ENCODE measurements at regions of chr19 and their contacts with region 1.

Region 1: DNA sequence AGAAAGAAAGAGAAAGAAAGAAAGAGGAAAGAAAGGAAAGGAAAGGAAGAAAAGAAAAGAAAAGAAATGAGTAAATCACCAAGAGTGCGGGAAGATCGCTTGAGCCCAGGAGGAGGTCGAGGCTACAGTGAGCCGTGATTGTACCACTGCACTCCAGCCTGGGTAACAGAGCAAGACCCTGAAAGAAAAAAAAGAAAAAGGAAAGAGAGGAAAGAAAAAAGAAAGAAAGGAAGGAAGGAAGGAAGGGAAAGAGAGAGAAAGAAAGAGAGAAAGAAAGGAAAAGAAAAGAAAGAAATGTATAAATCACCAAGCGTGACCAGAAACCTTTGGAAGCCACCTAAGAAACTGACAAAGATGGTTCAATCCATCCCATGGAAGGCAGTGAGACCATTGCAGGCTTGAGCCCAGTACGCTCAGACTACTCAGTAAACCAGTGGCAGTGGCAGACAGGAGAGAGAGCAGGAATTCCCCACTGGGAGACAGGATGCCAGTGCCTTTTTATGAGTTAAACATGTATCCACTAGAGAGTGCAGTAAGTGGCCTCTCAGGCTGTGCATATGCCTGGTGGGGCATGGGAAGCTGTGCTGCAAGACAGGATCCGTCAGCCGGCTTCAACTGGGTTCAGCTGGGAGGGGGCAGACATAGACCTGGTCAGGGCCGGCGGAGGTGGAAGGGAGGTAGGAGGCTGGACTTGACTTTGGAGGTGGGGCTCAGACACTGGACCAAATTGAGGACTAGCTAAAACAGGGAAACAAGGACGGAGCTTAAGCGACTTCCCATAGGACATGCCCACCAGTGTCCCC is 4.8 kb downstream of the GPR42 start:
- DNase-seq: no peak
- H3K4me3 ChIP-seq: no peak overlapping the region
- H3K27ac ChIP-seq: no peak overlapping the region
- H3K4me1 ChIP-seq: no peaks in the 10 kb centered on the region
- H3K27me3 ChIP-seq: peaks cover 0 to 2% (median 0%) of the 10 kb centered on the region in 4 experiments; a peak in 1 of 7 replicates
- CTCF ChIP-seq: no peak
- EP300 ChIP-seq: no peak
- POLR2A ChIP-seq: no peak
- RAD21 ChIP-seq: no peak

Region 2: GRCh38 chr19:35357867-35358573 is 17.7 kb before region 1 on chr19 and contains the start of gene FFAR3:
- CTCF ChIA-PET with region 1: interaction called, 16 read pairs
- POLR2A ChIA-PET with region 1: no interaction called
- DNase-seq: peak in 1 of 2 experiments; percentile 35
- H3K4me3 ChIP-seq: no peak within 1 kb of the TSS
- H3K27ac ChIP-seq: no peak within 1 kb of the TSS
- H3K4me1 ChIP-seq: no peaks in the 10 kb centered on the region
- H3K27me3 ChIP-seq: no peaks in the 10 kb centered on the region
- CTCF ChIP-seq: no peak
- EP300 ChIP-seq: no peak
- POLR2A ChIP-seq: no peak
- RAD21 ChIP-seq: no peak
- total RNA-seq, gene FFAR3: not detected in 2 replicates

Region 3: DNA sequence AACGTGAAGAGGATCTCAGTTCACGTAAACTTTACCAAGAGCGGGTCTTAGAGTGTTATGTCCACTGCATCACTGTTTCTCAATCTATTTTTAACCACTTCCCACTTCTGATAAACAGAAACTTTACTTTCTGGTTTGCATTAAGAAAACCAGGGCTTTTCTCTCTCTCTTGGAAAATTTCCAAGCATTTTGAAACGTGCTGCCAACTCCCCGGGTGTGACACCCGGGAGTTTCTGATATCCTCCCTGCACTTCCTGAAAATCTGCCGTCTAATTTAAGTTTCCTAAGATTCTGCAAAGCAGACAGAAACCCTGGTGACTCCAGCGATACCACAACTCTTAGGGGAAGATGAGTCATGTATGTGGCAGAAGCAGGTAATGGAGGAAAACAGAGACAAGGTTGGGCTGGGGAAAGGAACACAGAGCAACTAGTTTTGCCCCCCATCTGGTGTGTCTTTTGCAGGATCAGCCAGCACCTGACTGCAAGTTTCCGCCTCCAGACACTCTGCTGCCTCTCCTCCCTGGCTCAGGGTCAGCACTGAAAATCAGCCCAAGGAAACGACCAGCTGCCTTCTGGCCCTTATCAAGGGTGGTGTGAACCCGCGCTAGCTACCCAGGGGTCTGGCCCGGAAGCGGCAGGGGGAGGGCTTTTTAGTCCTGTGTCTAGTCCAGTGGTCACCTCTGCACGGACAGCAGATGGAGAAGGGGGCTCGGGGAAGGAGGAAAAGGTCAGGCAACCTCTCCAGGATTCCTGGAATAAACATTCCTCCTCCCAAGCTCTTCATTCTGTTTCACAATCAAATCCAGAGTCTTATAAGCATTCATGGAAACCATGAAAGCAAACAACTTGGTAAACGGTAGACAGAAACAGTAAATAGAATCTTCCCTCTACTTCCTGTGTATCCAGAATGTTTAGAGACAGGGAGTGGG is 61.0 kb after region 1 on chr19:
- CTCF ChIA-PET with region 1: no interaction called
- POLR2A ChIA-PET with region 1: no interaction called
- DNase-seq: no peak
- H3K4me3 ChIP-seq: no peak overlapping the region
- H3K27ac ChIP-seq: no peak overlapping the region
- H3K4me1 ChIP-seq: no peaks in the 10 kb centered on the region
- H3K27me3 ChIP-seq: no peaks in the 10 kb centered on the region
- CTCF ChIP-seq: no peak
- EP300 ChIP-seq: no peak
- POLR2A ChIP-seq: no peak
- RAD21 ChIP-seq: no peak

Measured in H1 (cell line).